Activated CD4-positive, alpha-beta T cell treated with anti-CD3 and anti-CD28 coated beads for 36 hours (primary cell): ENCODE measurements at regions of chr19 and their contacts with region 1.

Region 1: GRCh38 chr19:14073261-14073924 is 807 bp downstream of the MISP3 start:
- DNase-seq: peak; percentile 87
- ATAC-seq: peak; percentile 74
- H3K4me3 Mint-ChIP-seq: peak overlapping the region; percentile 87
- H3K27ac Mint-ChIP-seq: peak overlapping the region; percentile 80
- H3K4me1 Mint-ChIP-seq: peaks cover 21% of the 10 kb centered on the region
- H3K27me3 Mint-ChIP-seq: peaks cover 2% of the 10 kb centered on the region

Region 2: DNA sequence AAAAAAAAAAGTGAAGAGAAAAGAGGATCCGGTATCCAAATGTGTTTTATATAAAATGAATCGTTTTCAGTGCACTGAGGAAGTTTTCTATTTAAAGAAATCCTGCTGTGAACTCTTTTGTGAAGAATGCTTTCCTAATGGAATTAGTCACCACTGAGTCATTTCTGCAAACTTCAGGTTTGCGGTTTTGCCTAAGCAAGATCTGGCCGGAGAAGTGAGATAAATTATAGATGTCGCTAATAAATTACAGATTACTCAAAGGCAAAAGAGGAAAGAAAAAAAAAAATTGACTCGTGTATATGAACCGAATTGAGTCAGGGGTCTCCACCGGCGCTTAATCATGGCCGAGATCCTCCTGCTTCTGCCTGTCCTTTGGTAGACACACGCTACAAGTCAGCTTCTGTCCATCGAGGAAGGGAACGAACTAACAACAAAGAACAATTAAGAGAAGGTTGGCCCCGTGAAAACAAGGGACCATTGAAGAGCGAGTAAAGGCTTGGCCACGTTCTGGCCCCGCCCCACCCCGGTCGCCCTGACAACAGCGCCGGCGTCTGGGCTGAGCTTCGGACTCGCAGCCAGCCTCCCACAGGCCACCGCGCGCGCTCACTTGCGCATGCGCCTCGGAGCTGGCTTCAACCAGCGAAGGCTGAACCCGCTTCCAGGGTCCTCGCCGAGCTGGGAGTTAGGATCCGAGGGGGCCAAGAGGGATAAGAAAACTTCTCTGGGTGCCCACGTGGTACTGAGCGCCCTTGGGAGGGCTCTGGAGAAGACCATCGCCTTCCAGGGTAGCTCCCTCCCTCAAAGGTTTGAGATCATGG is 342.0 kb before region 1 on chr19:
- CTCF ChIA-PET with region 1: interaction called, 3 read pairs
- POLR2A ChIA-PET with region 1: no interaction called
- intact Hi-C with region 1: loop called in 1 of 2 experiments (anchors 1 kb)
- DNase-seq: peak; percentile 97
- ATAC-seq: peak; percentile 99
- H3K4me3 Mint-ChIP-seq: peak overlapping the region; percentile 87
- H3K27ac Mint-ChIP-seq: peak overlapping the region; percentile 94
- H3K4me1 Mint-ChIP-seq: peaks cover 25% of the 10 kb centered on the region
- H3K27me3 Mint-ChIP-seq: no peaks in the 10 kb centered on the region

Region 3: DNA sequence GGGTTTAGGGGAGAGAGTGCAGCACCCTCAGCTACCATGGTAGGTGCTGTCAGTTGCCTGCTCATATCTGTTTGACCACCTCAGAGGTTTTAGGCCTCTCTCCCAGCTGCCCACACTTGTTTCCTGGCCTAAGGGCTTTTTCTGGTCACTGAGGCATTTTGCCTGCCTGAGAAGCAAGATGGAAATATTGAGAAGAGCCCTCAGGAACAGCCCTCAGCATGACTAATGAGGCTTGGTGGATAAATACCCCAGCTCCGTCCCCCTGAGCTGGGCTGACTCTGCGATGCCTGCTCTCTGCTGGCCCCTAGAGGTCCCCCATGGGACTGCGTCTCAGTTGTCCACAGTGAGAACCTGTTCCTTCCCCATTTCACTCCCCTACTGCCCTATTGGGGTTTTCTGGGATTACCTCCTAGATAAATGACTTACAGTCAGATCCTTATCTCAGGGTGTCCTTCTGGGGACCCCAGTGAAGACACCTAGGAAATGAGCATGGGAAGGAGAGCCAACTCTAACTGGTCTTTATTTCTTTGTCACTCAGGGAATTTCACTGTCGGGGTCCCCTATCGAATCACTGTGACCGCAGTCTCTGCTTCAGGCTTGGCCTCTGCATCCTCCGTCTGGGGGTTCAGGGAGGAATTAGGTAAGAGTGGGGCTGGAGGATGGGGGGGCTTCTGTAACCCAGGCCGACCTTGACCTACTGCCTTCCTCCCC is 24.8 kb before region 1 on chr19:
- CTCF ChIA-PET with region 1: interaction called, 16 read pairs
- POLR2A ChIA-PET with region 1: no interaction called
- intact Hi-C with region 1: no loop called
- DNase-seq: peak; percentile 87
- ATAC-seq: peak; percentile 87
- H3K4me3 Mint-ChIP-seq: no peak overlapping the region
- H3K27ac Mint-ChIP-seq: peak overlapping the region; percentile 25
- H3K4me1 Mint-ChIP-seq: peaks cover 4% of the 10 kb centered on the region
- H3K27me3 Mint-ChIP-seq: no peaks in the 10 kb centered on the region

Region 4: GRCh38 chr19:14091081-14091812 is 17.9 kb after region 1 on chr19:
- CTCF ChIA-PET with region 1: interaction called, 14 read pairs
- POLR2A ChIA-PET with region 1: no interaction called
- intact Hi-C with region 1: loop called (anchors 1 to 2 kb)
- DNase-seq: peak; percentile 76
- ATAC-seq: peak; percentile 75
- H3K4me3 Mint-ChIP-seq: peak overlapping the region; percentile 81
- H3K27ac Mint-ChIP-seq: peak overlapping the region; percentile 98
- H3K4me1 Mint-ChIP-seq: peaks cover 20% of the 10 kb centered on the region
- H3K27me3 Mint-ChIP-seq: no peaks in the 10 kb centered on the region